CD4-positive, alpha-beta memory T cell (primary cell): ENCODE measurements at regions of chr1 and their contacts with region 1.

Region 1: GRCh38 chr1:38834937-38835827 is 24.4 kb downstream of the RRAGC start:
- DNase-seq: peak; percentile 51 to 73 (median 70)
- H3K4me3 ChIP-seq: no peak overlapping the region
- H3K4me3 Mint-ChIP-seq: no peak overlapping the region
- H3K27ac ChIP-seq: no peak overlapping the region
- H3K27ac Mint-ChIP-seq: no peak overlapping the region
- H3K4me1 ChIP-seq: no peaks in the 10 kb centered on the region
- H3K4me1 Mint-ChIP-seq: peaks cover 0 to 7% (median under 1%) of the 10 kb centered on the region in 4 donors
- H3K27me3 ChIP-seq: no peaks in the 10 kb centered on the region
- H3K27me3 Mint-ChIP-seq: peaks cover 2 to 6% of the 10 kb centered on the region in 2 donors

Region 2: DNA sequence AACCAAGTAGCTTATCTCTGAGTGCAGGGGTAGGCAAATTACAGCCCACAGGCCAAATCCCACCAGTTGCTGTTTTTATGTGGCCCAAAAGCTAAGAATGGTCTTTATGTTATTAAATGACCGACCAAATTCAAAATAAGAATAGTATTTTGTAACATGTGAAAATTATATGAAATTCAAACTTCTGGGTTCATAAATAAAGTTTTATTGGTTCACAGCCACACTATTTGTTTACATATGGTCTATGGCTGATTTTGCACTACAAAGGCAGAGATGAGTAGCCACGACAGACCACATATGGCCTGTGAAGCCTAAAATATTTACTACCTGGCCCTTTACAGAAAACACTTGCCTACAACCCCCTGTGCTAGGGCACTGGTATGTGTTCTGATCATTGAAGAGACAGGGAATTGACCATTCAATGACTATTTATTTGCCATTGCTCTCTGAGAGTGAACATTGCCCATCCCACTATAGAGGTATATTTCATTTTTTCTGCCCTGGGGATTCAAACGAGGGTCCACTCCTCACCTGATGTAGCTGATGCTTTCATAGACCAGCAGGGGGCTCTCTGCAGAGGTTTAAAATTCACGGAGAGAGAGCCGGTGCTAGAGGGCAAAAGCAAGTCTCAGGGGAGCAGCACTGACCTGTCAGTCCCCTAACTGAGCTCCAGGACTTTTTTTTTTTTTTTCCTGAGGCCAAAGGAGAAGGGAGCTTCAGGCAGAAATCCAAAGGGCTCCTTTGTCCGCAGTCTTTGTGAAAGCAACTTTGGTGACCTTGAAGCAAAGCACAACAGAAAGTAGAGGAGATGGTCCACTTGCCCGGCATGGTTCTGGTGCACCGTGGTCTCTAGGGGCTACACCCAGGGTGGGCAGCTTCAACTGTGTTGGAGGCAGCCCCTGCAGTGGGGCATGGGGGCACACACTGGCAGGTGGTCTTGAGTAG is 1232.2 kb before region 1 on chr1:
- CTCF ChIA-PET with region 1: no interaction called
- POLR2A ChIA-PET with region 1: no interaction called
- intact Hi-C with region 1: loop called (anchors 2 kb)
- DNase-seq: peak in 4 of 5 donors; percentile 47 to 58 (median 54)
- H3K4me3 ChIP-seq: no peak overlapping the region
- H3K4me3 Mint-ChIP-seq: no peak overlapping the region
- H3K27ac ChIP-seq: no peak overlapping the region
- H3K27ac Mint-ChIP-seq: peak overlapping the region in 1 of 7 donors; percentile 11
- H3K4me1 ChIP-seq: no peaks in the 10 kb centered on the region
- H3K4me1 Mint-ChIP-seq: peaks cover 0 to 7% (median 0%) of the 10 kb centered on the region in 4 donors
- H3K27me3 ChIP-seq: no peaks in the 10 kb centered on the region
- H3K27me3 Mint-ChIP-seq: peaks cover 5% of the 10 kb centered on the region in 2 donors

Region 3: GRCh38 chr1:37989361-37989930 is 845.7 kb before region 1 on chr1:
- CTCF ChIA-PET with region 1: interaction called, 6 read pairs
- POLR2A ChIA-PET with region 1: no interaction called
- intact Hi-C with region 1: loop called (anchors 1 kb)
- DNase-seq: peak in 2 of 5 donors; percentile 32 to 57
- H3K4me3 ChIP-seq: peak overlapping the region; percentile 91 to 93
- H3K4me3 Mint-ChIP-seq: peak overlapping the region; percentile 97 to 100 (median 99)
- H3K27ac ChIP-seq: peak overlapping the region; percentile 78
- H3K27ac Mint-ChIP-seq: peak overlapping the region; percentile 86 to 99 (median 95)
- H3K4me1 ChIP-seq: peaks cover 25% of the 10 kb centered on the region
- H3K4me1 Mint-ChIP-seq: peaks cover 10 to 36% (median 21%) of the 10 kb centered on the region in 4 donors
- H3K27me3 ChIP-seq: no peaks in the 10 kb centered on the region
- H3K27me3 Mint-ChIP-seq: peaks cover 0 to 2% of the 10 kb centered on the region in 2 donors

Region 4: DNA sequence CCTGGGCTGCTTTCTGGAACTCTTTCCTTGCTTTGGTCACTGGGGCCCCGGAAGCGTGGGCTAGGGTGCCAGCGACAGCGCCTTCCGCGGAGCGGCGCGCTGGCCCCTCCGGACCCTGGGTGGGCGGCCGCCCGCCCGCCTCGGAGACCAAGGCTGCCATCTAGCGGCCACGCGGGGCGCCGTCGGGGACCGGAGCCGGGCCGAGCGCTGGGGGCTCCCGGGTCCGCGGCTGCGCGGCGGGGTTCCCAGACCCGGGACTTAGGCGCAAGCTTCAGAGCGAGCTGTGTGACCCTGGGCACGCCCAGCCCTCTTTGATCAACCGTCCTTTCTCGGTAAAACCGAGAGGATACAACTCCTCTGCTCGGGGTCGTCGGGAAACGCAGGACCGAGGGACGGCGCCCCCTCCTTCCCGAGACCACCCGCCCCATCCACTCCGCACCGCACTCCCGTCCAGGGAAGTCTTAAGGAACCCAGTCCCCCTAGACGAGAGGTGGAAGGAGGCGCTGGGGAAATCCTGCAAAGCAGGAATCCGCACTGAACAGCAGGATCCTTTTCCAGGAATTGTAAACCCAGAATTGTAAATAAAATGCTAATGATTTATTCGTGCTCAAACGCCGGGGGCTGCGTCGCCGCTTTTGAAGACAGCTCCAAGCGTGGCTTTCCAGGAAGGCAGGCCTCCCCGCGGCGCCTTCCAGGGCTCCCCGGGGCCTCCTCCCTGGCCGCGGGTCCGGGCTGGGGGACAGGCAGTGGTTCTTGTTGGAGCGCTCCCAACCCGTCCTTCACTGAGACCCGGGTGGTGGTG is 16.8 kb before region 1 on chr1:
- CTCF ChIA-PET with region 1: interaction called, 11 read pairs
- POLR2A ChIA-PET with region 1: no interaction called
- intact Hi-C with region 1: no loop called
- DNase-seq: peak in 4 of 5 donors; percentile 13 to 34 (median 18)
- H3K4me3 ChIP-seq: no peak overlapping the region
- H3K4me3 Mint-ChIP-seq: peak overlapping the region in 3 of 8 donors; percentile 13 to 59 (median 53)
- H3K27ac ChIP-seq: no peak overlapping the region
- H3K27ac Mint-ChIP-seq: no peak overlapping the region
- H3K4me1 ChIP-seq: peaks cover 19% of the 10 kb centered on the region
- H3K4me1 Mint-ChIP-seq: peaks cover 3 to 23% (median 6%) of the 10 kb centered on the region in 4 donors
- H3K27me3 ChIP-seq: peaks cover 41% of the 10 kb centered on the region
- H3K27me3 Mint-ChIP-seq: peaks cover 49 to 63% of the 10 kb centered on the region in 2 donors

Region 5: GRCh38 chr1:39091845-39092645 is 256.9 kb after region 1 on chr1:
- CTCF ChIA-PET with region 1: interaction called, 14 read pairs
- POLR2A ChIA-PET with region 1: interaction called, 3 read pairs
- intact Hi-C with region 1: loop called (anchors 1 kb)
- DNase-seq: peak; percentile 48 to 66 (median 58)
- H3K4me3 ChIP-seq: no peak overlapping the region
- H3K4me3 Mint-ChIP-seq: no peak overlapping the region
- H3K27ac ChIP-seq: no peak overlapping the region
- H3K27ac Mint-ChIP-seq: peak overlapping the region in 3 of 7 donors; percentile 4 to 41 (median 31)
- H3K4me1 ChIP-seq: peaks cover 22% of the 10 kb centered on the region
- H3K4me1 Mint-ChIP-seq: peaks cover 9 to 20% (median 14%) of the 10 kb centered on the region in 4 donors
- H3K27me3 ChIP-seq: no peaks in the 10 kb centered on the region
- H3K27me3 Mint-ChIP-seq: peaks cover 0 to 3% of the 10 kb centered on the region in 2 donors

Region 6: GRCh38 chr1:40381268-40382107 is 1546.3 kb after region 1 on chr1:
- CTCF ChIA-PET with region 1: no interaction called
- POLR2A ChIA-PET with region 1: no interaction called
- intact Hi-C with region 1: no loop called
- DNase-seq: peak; percentile 64 to 74 (median 70)
- H3K4me3 ChIP-seq: peak overlapping the region; percentile 4 to 28
- H3K4me3 Mint-ChIP-seq: peak overlapping the region; percentile 78 to 94 (median 87)
- H3K27ac ChIP-seq: peak overlapping the region; percentile 99
- H3K27ac Mint-ChIP-seq: peak overlapping the region; percentile 95 to 100 (median 99)
- H3K4me1 ChIP-seq: peaks cover 100% of the 10 kb centered on the region
- H3K4me1 Mint-ChIP-seq: peaks cover 68 to 98% (median 83%) of the 10 kb centered on the region in 4 donors
- H3K27me3 ChIP-seq: no peaks in the 10 kb centered on the region
- H3K27me3 Mint-ChIP-seq: no peaks in the 10 kb centered on the region